ENCODE measurements at regions of chr7 and their contacts with region 1.

Region 1: GRCh38 chr7:24812310-24812945 is 55.2 kb upstream of the GSDME start:
- DNase-seq: peak; percentile 21 to 56 (median 40)
- H3K4me3 ChIP-seq: no peak overlapping the region
- H3K4me3 Mint-ChIP-seq: no peak overlapping the region
- H3K27ac ChIP-seq: no peak overlapping the region
- H3K27ac Mint-ChIP-seq: peak overlapping the region in 4 of 8 donors; percentile 14 to 61 (median 34)
- H3K4me1 ChIP-seq: no peaks in the 10 kb centered on the region
- H3K4me1 Mint-ChIP-seq: peaks cover 0 to 4% (median 0%) of the 10 kb centered on the region in 3 donors
- H3K27me3 ChIP-seq: no peaks in the 10 kb centered on the region
- H3K27me3 Mint-ChIP-seq: no peaks in the 10 kb centered on the region

Region 2: GRCh38 chr7:24800667-24801066 is 11.8 kb before region 1 on chr7:
- CTCF ChIA-PET with region 1: interaction called, 26 read pairs
- POLR2A ChIA-PET with region 1: no interaction called
- DNase-seq: no peak
- H3K4me3 ChIP-seq: no peak overlapping the region
- H3K4me3 Mint-ChIP-seq: no peak overlapping the region
- H3K27ac ChIP-seq: no peak overlapping the region
- H3K27ac Mint-ChIP-seq: peak overlapping the region in 1 of 8 donors; percentile 43
- H3K4me1 ChIP-seq: no peaks in the 10 kb centered on the region
- H3K4me1 Mint-ChIP-seq: peaks cover 5 to 9% (median 7%) of the 10 kb centered on the region in 3 donors
- H3K27me3 ChIP-seq: no peaks in the 10 kb centered on the region
- H3K27me3 Mint-ChIP-seq: no peaks in the 10 kb centered on the region

Region 3: DNA sequence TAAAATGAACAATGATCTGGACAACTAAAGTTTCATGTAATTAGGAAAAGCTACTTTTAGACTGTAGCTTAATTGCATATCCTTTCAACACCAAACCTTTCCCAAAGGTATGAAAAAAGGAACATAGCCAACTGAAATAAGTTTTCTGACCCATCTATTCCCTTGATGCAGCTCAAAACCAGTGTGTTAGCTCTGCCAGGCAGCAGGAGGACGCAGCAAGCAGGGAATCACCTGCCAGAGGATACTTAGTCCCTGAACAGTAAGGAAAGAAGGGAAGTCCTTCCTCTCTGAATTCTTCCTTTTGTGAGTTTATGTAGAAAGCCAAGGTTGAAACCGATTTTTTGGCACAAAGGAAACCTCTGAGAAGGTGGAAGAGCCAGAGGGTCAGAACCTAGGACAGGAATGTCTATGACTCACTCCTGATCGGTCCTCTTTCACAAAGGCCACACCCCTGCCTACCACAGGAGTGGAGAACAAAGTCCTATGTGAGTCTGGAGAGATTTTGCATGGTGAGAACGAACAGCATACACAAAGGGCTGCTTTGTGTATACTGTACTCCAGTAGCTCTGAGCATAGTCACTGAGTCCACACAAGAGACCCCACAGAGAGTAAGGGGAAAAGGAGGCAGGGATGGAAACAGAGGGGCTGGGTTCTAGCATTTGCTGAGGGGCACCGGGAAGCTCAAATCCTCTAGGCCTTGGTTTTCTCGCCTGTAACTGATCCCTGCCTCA is 13.7 kb after region 1 on chr7:
- CTCF ChIA-PET with region 1: interaction called, 17 read pairs
- POLR2A ChIA-PET with region 1: interaction called, 3 read pairs
- DNase-seq: peak in 1 of 5 donors; percentile 11
- H3K4me3 ChIP-seq: peak overlapping the region; percentile 17
- H3K4me3 Mint-ChIP-seq: peak overlapping the region in 6 of 7 donors; percentile 65 to 83 (median 73)
- H3K27ac ChIP-seq: no peak overlapping the region
- H3K27ac Mint-ChIP-seq: peak overlapping the region; percentile 89 to 98 (median 94)
- H3K4me1 ChIP-seq: peaks cover 38% of the 10 kb centered on the region
- H3K4me1 Mint-ChIP-seq: peaks cover 62 to 77% (median 72%) of the 10 kb centered on the region in 3 donors
- H3K27me3 ChIP-seq: no peaks in the 10 kb centered on the region
- H3K27me3 Mint-ChIP-seq: peaks cover 0 to 2% of the 10 kb centered on the region in 2 donors

Region 4: DNA sequence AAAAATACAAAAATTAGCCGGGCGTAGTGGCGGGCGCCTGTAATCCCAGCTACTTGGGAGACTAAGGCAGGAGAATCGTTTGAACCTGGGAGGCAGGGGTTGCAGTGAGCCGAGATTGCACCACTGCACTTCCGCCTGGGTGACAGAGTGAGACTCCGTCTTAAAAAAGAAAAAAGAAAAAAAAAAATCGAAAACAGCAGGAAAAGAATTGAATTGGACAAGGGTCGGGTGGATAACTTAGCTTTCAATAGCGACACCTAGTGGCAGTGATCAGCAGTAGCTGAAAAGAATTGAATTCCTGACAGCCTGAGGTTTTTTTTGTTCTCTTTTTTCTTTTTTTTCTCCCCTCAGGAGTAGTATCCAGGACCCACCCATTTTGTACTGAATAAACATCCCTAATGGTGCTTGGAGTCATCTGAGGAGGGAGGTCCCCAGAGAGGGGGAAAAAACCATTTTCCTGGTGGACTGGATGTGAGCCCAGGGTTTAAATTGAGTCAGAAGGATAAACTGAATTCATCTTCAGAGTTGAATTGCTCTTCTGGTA is 257.5 kb after region 1 on chr7:
- CTCF ChIA-PET with region 1: interaction called, 50 read pairs
- POLR2A ChIA-PET with region 1: no interaction called
- DNase-seq: peak; percentile 12 to 60 (median 49)
- H3K4me3 ChIP-seq: no peak overlapping the region
- H3K4me3 Mint-ChIP-seq: no peak overlapping the region
- H3K27ac ChIP-seq: no peak overlapping the region
- H3K27ac Mint-ChIP-seq: no peak overlapping the region
- H3K4me1 ChIP-seq: no peaks in the 10 kb centered on the region
- H3K4me1 Mint-ChIP-seq: peaks cover 2 to 11% (median 9%) of the 10 kb centered on the region in 3 donors
- H3K27me3 ChIP-seq: no peaks in the 10 kb centered on the region
- H3K27me3 Mint-ChIP-seq: no peaks in the 10 kb centered on the region

Region 5: GRCh38 chr7:25093268-25093826 is 280.9 kb after region 1 on chr7:
- CTCF ChIA-PET with region 1: interaction called, 209 read pairs
- POLR2A ChIA-PET with region 1: no interaction called
- DNase-seq: peak; percentile 57 to 78 (median 62)
- H3K4me3 ChIP-seq: no peak overlapping the region
- H3K4me3 Mint-ChIP-seq: no peak overlapping the region
- H3K27ac ChIP-seq: no peak overlapping the region
- H3K27ac Mint-ChIP-seq: no peak overlapping the region
- H3K4me1 ChIP-seq: no peaks in the 10 kb centered on the region
- H3K4me1 Mint-ChIP-seq: peaks cover 6 to 11% (median 8%) of the 10 kb centered on the region in 3 donors
- H3K27me3 ChIP-seq: no peaks in the 10 kb centered on the region
- H3K27me3 Mint-ChIP-seq: peaks cover 1 to 2% of the 10 kb centered on the region in 2 donors

Measured in CD8-positive, alpha-beta memory T cell (primary cell).